ENCODE measurements at regions of chr1 and their contacts with region 1.

Region 1: DNA sequence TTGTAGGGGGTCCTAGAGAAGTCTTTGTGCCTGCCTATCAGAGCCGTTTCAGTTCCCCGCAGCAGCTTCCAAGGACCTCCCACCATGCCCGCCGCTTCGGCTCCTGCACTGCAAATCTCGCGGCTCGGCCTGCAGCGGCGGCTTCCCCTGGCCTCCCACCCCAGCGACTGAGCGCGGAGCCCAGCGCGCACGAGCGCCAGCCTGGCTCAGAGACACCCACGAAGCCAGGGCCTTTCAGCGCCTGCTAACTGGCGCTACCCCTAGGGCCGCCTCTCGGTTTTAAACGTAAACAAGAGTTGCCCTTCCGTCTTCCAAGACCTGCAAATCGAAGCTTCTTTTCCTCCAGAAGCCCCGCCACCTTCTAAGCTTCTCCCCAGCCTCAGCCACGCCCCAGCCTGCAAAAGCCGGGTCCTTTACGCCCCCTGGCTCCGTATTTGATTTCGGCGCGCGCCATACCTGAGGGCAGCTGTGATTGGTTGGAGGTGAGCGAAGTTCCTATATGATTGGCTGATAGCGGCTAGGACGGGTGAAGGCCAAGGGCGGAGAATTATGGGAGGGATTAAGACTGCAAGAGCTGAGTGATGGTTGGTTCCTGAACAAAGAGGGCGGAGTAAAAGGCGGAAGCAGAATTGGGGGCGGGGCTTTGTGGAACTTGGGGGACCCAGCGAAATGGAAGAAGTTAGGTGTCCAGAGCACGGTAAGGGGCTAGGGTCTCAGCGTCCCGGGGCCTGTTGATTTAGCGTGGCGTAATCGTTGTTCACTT is at the start of gene TTF2:
- DNase-seq: peak; percentile 93 to 98
- H3K4me3 ChIP-seq: peak within 1 kb of the TSS; percentile 77 to 96 (median 90)
- H3K27ac ChIP-seq: peak within 1 kb of the TSS; percentile 92
- H3K4me1 ChIP-seq: peaks cover 0 to 3% (median 1%) of the 10 kb centered on the region in 4 experiments; a peak in 1 of 7 replicates
- H3K27me3 ChIP-seq: no peaks in the 10 kb centered on the region
- CTCF ChIP-seq: peak in 1 of 3 experiments; percentile 30; a peak in 2 of 4 replicates
- EP300 ChIP-seq: no peak
- POLR2A ChIP-seq: peak; percentile 80 to 89
- RAD21 ChIP-seq: 0 out of 4 replicates have a peak, but pooled peaks of 1 of the 2 experiments have one; percentile 14
- total RNA-seq, gene TTF2: 89.6 and 93.2 TPM in 2 replicates

Region 2: DNA sequence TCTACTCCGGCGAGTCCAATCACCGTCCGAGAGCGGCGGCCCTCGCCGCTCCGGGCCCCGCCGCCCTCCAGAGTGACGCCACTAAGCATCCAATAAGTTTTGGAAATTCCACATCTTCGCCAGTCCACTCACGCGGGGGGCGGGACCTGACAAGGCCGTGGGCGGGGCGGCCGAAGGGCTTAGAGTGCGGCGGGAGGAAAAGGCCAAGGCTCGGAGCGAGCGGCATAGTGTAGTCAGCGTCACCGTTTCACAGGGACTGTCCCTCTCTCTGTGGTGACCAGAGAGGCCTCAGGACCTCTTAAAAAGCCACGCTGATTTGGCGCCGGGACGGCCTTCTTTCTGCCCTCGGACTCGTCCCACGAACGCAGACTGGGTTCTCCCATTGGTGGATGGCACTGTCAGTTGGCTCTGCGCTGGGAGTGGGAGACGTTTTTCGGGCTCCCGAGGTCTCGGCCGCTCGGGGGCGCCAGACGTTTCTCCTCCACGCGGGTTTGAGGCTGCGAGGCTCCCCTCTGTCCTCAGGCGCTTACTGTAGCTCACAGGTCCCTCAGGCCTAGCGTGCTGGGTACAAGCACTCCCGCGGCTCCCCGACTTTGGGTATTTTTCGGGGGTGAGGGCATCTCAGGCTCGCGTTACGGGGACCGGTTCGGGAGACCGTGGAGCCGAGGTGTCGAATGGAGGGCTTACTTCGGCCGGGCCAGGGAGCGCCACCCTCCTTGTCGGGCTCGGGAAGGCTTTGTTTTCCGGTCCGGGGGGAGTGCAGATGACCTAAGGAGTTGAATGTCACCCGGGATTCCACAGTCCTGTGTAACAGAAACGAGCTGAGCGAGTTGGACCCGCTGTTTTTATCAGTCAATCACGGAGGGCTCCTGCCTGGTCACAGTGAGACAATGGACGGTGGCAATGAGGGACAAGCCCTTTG is 62.2 kb after region 1 on chr1:
- CTCF ChIA-PET with region 1: interaction called, 5 read pairs
- POLR2A ChIA-PET with region 1: interaction called, 19 read pairs
- DNase-seq: peak; percentile 77 to 93
- H3K4me3 ChIP-seq: peak overlapping the region; percentile 59 to 79 (median 75)
- H3K27ac ChIP-seq: peak overlapping the region; percentile 55
- H3K4me1 ChIP-seq: peaks cover 2 to 14% (median 8%) of the 10 kb centered on the region in 4 experiments
- H3K27me3 ChIP-seq: no peaks in the 10 kb centered on the region; a peak in 1 of 7 replicates
- CTCF ChIP-seq: peak; percentile 60 to 69 (median 65)
- EP300 ChIP-seq: no peak
- POLR2A ChIP-seq: peak; percentile 70
- RAD21 ChIP-seq: peak; percentile 61 to 76